Natural killer cell (primary cell): ENCODE measurements at regions of chr19 and their contacts with region 1.

Region 1: GRCh38 chr19:10835754-10836477 is at the start of gene TMED1:
- DNase-seq: peak; percentile 94 to 98
- ATAC-seq: peak; percentile 86 to 95 (median 86)
- H3K4me3 ChIP-seq: peak within 1 kb of the TSS; percentile 65
- H3K4me3 Mint-ChIP-seq: peak within 1 kb of the TSS; percentile 91
- H3K27ac ChIP-seq: peak within 1 kb of the TSS; percentile 94
- H3K27ac Mint-ChIP-seq: peak within 1 kb of the TSS; percentile 98 to 100
- H3K4me1 ChIP-seq: peaks cover 20% of the 10 kb centered on the region
- H3K4me1 Mint-ChIP-seq: peaks cover 14 to 18% of the 10 kb centered on the region in 2 donors
- H3K27me3 ChIP-seq: no peaks in the 10 kb centered on the region
- H3K27me3 Mint-ChIP-seq: no peaks in the 10 kb centered on the region
- CTCF ChIP-seq: no peak
- total RNA-seq, gene TMED1: 20.5 to 27.8 (median 27.4) TPM

Region 2: GRCh38 chr19:10870955-10871603 is 35.2 kb after region 1 on chr19 and contains the start of gene CARM1:
- intact Hi-C with region 1: loop called (anchors 2 kb)
- DNase-seq: peak; percentile 98 to 99
- ATAC-seq: peak; percentile 83 to 95 (median 85)
- H3K4me3 ChIP-seq: peak within 1 kb of the TSS; percentile 57
- H3K4me3 Mint-ChIP-seq: peak within 1 kb of the TSS; percentile 78
- H3K27ac ChIP-seq: peak within 1 kb of the TSS; percentile 54
- H3K27ac Mint-ChIP-seq: peak within 1 kb of the TSS; percentile 61 to 76
- H3K4me1 ChIP-seq: peaks cover 26% of the 10 kb centered on the region
- H3K4me1 Mint-ChIP-seq: peaks cover 9 to 27% of the 10 kb centered on the region in 2 donors
- H3K27me3 ChIP-seq: no peaks in the 10 kb centered on the region
- H3K27me3 Mint-ChIP-seq: no peaks in the 10 kb centered on the region
- CTCF ChIP-seq: peak; percentile 46
- total RNA-seq, gene CARM1: 13.4 to 21.3 (median 19.8) TPM